CD4-positive, alpha-beta T cell (primary cell): ENCODE measurements at regions of chr1 and their contacts with region 1.

Region 1: DNA sequence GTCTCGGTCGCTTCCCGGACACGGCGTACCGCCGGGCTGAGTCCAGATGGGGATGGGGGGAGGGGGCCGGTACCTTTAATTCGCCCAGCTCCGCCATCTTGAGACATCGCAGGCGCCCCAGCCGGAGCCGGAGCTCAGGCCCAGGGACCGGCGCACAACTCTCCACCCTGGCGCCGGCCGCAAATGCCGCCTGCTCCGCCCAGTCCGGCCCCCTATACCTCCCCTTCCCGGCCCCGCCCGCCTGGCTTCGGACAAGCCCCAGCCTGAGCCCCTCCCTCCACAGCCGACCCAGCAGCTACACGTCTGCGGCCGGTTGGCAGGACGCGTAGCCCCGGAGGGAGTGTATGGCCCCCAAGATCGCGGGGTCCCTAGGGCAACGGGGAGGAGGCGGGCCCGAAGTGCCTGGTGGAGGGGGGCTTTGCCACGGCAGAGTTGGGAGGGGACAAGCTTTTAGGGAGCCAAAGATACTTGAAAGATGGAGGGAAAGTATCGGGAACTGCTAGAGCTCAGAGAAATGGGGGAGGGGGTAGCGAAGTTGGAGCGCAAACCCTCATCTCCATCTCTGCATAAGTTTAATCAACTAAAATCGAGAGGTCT is at the start of gene PIAS3:
- DNase-seq: peak; percentile 61 to 90 (median 75)
- ATAC-seq: peak; percentile 79
- H3K4me3 ChIP-seq: peak within 1 kb of the TSS; percentile 75
- H3K4me3 Mint-ChIP-seq: peak within 1 kb of the TSS; percentile 98
- H3K27ac ChIP-seq: peak within 1 kb of the TSS; percentile 32 to 67
- H3K27ac Mint-ChIP-seq: peak within 1 kb of the TSS; percentile 85
- H3K4me1 ChIP-seq: peaks cover 22% of the 10 kb centered on the region
- H3K4me1 Mint-ChIP-seq: peaks cover 20% of the 10 kb centered on the region
- H3K27me3 ChIP-seq: no peaks in the 10 kb centered on the region
- H3K27me3 Mint-ChIP-seq: no peaks in the 10 kb centered on the region
- CTCF ChIP-seq: no peak
- total RNA-seq, gene PIAS3: 18.7 to 19.7 TPM

Region 2: GRCh38 chr1:145720877-145721671 is 137.9 kb before region 1 on chr1:
- CTCF ChIA-PET with region 1: no interaction called
- POLR2A ChIA-PET with region 1: no interaction called
- intact Hi-C with region 1: no loop called
- DNase-seq: peak; percentile 37 to 80 (median 61)
- ATAC-seq: peak; percentile 85
- H3K4me3 ChIP-seq: peak overlapping the region; percentile 35
- H3K4me3 Mint-ChIP-seq: peak overlapping the region; percentile 48
- H3K27ac ChIP-seq: no peak overlapping the region
- H3K27ac Mint-ChIP-seq: no peak overlapping the region
- H3K4me1 ChIP-seq: peaks cover 14% of the 10 kb centered on the region
- H3K4me1 Mint-ChIP-seq: peaks cover 9% of the 10 kb centered on the region
- H3K27me3 ChIP-seq: peaks cover 3 to 7% of the 10 kb centered on the region in 2 experiments
- H3K27me3 Mint-ChIP-seq: peaks cover 29% of the 10 kb centered on the region
- CTCF ChIP-seq: peak; percentile 98

Region 3: GRCh38 chr1:145786271-145786670 is 72.7 kb before region 1 on chr1:
- CTCF ChIA-PET with region 1: no interaction called
- POLR2A ChIA-PET with region 1: no interaction called
- intact Hi-C with region 1: no loop called
- DNase-seq: no peak
- ATAC-seq: no peak
- H3K4me3 ChIP-seq: no peak overlapping the region
- H3K4me3 Mint-ChIP-seq: no peak overlapping the region
- H3K27ac ChIP-seq: no peak overlapping the region
- H3K27ac Mint-ChIP-seq: peak overlapping the region; percentile 3
- H3K4me1 ChIP-seq: no peaks in the 10 kb centered on the region
- H3K4me1 Mint-ChIP-seq: peaks cover 32% of the 10 kb centered on the region
- H3K27me3 ChIP-seq: no peaks in the 10 kb centered on the region
- H3K27me3 Mint-ChIP-seq: no peaks in the 10 kb centered on the region
- CTCF ChIP-seq: no peak

Region 4: GRCh38 chr1:145823565-145824498 is 35.2 kb before region 1 on chr1 and contains the starts of genes POLR3C and RNF115:
- CTCF ChIA-PET with region 1: no interaction called
- POLR2A ChIA-PET with region 1: interaction called, 37 read pairs
- intact Hi-C with region 1: no loop called
- DNase-seq: peak; percentile 75 to 95 (median 86)
- ATAC-seq: peak; percentile 96
- H3K4me3 ChIP-seq: peak within 1 kb of the TSS; percentile 74
- H3K4me3 Mint-ChIP-seq: peak within 1 kb of the TSS; percentile 96
- H3K27ac ChIP-seq: peak within 1 kb of the TSS; percentile 78 to 81
- H3K27ac Mint-ChIP-seq: peak within 1 kb of the TSS; percentile 91
- H3K4me1 ChIP-seq: peaks cover 12% of the 10 kb centered on the region
- H3K4me1 Mint-ChIP-seq: peaks cover 29% of the 10 kb centered on the region
- H3K27me3 ChIP-seq: no peaks in the 10 kb centered on the region
- H3K27me3 Mint-ChIP-seq: no peaks in the 10 kb centered on the region
- CTCF ChIP-seq: no peak
- total RNA-seq, gene POLR3C: 18.6 to 19.9 TPM
- total RNA-seq, gene RNF115: 11.4 to 11.9 TPM

Region 5: DNA sequence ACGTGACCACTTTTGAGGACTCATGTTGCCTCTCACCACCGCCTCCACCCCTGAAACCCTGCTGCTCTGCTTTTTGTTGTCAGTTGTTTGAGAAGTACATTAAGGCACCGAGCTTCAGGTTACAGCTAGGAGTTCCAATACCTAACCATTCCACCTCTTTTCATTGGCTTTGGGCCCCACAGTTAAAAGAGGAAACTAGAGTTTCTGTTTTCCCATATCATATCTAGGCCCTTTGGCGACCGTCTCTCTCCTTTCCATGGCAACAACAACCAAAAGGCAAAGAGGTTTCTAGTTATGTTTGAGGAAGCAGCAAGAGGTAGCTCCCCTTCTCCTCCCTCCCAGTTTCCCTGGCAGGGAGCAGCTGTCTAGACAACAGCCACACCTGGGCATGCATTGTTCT is 20.8 kb after region 1 on chr1:
- CTCF ChIA-PET with region 1: no interaction called
- POLR2A ChIA-PET with region 1: interaction called, 24 read pairs
- intact Hi-C with region 1: loop called in 1 of 2 experiments (anchors 2 kb)
- DNase-seq: no peak
- ATAC-seq: no peak
- H3K4me3 ChIP-seq: no peak overlapping the region
- H3K4me3 Mint-ChIP-seq: no peak overlapping the region
- H3K27ac ChIP-seq: no peak overlapping the region
- H3K27ac Mint-ChIP-seq: no peak overlapping the region
- H3K4me1 ChIP-seq: no peaks in the 10 kb centered on the region
- H3K4me1 Mint-ChIP-seq: peaks cover 4% of the 10 kb centered on the region
- H3K27me3 ChIP-seq: peaks cover 13 to 18% of the 10 kb centered on the region in 2 experiments
- H3K27me3 Mint-ChIP-seq: peaks cover 25% of the 10 kb centered on the region
- CTCF ChIP-seq: no peak

Region 6: DNA sequence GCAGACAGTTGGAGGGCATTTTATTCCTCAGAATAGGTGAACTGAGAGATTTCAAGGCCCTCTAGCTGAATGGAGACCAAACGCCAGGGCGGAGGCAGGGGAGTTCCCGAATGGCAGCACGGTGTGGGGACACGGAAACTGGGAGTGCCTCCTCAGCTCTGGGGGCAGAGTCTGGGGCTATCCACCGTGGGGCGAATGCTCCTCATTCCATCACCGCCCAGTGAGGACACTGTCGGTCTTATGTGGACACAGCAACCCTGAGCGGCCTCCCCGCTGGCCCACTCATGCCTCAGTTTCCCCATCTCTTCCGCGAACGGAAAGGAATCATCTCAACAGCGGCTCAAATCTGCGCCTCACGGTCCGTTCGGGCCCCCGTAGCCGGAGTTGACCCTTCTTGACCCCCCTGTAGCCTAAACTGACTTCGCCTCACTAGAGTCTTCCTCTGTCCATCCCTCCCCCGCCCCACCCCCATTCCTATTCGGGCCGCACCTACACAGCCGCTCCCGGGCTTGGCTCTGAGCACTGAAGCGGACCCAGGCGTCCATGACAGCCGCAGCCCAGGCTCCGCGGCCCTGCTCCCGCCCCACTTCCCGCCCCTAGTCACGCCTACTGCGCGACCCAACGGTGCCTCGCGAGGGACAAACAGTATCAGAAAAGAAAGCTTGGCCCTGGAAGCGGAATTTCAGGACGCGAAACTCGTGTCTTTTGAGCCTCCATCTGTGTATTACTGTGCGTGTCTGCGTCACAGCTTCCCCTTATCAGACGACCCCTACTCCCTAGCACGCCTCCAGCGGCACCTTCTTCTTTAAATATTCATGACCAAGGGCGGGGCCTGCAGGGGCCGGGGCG is 59.4 kb after region 1 on chr1 and contains the start of gene PEX11B:
- CTCF ChIA-PET with region 1: interaction called, 4 read pairs
- POLR2A ChIA-PET with region 1: interaction called, 37 read pairs
- intact Hi-C with region 1: loop called (anchors 2 to 5 kb)
- DNase-seq: peak; percentile 87 to 96 (median 92)
- ATAC-seq: peak; percentile 90
- H3K4me3 ChIP-seq: peak within 1 kb of the TSS; percentile 87
- H3K4me3 Mint-ChIP-seq: peak within 1 kb of the TSS; percentile 94
- H3K27ac ChIP-seq: peak within 1 kb of the TSS; percentile 52 to 60
- H3K27ac Mint-ChIP-seq: peak within 1 kb of the TSS; percentile 92
- H3K4me1 ChIP-seq: peaks cover 31% of the 10 kb centered on the region
- H3K4me1 Mint-ChIP-seq: peaks cover 47% of the 10 kb centered on the region
- H3K27me3 ChIP-seq: no peaks in the 10 kb centered on the region
- H3K27me3 Mint-ChIP-seq: no peaks in the 10 kb centered on the region
- CTCF ChIP-seq: no peak
- total RNA-seq, gene PEX11B: 11.6 to 13.2 TPM

Region 7: GRCh38 chr1:145963995-145964901 is 105.3 kb after region 1 on chr1 and contains the starts of genes ANKRD34A and POLR3GL:
- CTCF ChIA-PET with region 1: no interaction called
- POLR2A ChIA-PET with region 1: interaction called, 44 read pairs
- intact Hi-C with region 1: loop called in 1 of 2 experiments (anchors 2 kb)
- DNase-seq: peak; percentile 75 to 96 (median 88)
- ATAC-seq: peak; percentile 90
- H3K4me3 ChIP-seq: peak within 1 kb of the TSS; percentile 72
- H3K4me3 Mint-ChIP-seq: peak within 1 kb of the TSS; percentile 94
- H3K27ac ChIP-seq: peak within 1 kb of the TSS; percentile 58 to 62
- H3K27ac Mint-ChIP-seq: peak within 1 kb of the TSS; percentile 94
- H3K4me1 ChIP-seq: peaks cover 58% of the 10 kb centered on the region
- H3K4me1 Mint-ChIP-seq: peaks cover 58% of the 10 kb centered on the region
- H3K27me3 ChIP-seq: no peaks in the 10 kb centered on the region
- H3K27me3 Mint-ChIP-seq: no peaks in the 10 kb centered on the region
- CTCF ChIP-seq: no peak
- total RNA-seq, gene ANKRD34A: 0.42 to 0.47 TPM
- total RNA-seq, gene POLR3GL: 17.2 to 17.8 TPM

Region 8: DNA sequence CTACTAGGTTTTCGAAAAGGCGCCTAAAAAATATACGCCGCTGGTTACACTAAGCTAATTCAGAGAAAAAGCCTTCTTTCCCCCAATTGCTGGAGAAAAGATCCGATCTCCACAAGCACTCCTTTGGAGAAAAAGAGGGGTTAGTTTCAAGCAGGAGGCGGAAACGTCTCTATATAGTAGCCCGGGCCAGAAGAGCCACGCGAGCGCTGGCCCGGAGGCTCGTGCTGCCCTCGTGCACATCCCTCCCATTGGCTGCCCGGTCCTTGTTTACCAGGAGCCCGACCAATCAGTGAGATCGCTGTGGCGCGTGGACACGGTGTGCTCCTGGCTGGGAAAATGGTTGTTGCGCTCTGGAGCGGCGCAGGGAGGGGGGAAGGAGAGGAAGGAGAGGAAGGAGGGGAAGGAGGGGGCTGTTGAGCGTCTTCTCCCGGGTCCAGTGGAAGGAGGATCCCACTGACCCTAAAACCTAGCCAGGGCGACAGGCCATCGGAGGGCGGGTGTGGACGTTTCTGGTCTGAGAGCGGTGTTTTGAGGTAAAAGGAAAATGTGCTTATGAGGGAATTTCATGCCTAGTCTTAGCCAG is 137.5 kb after region 1 on chr1 and contains the start of gene TXNIP:
- CTCF ChIA-PET with region 1: no interaction called
- POLR2A ChIA-PET with region 1: interaction called, 38 read pairs
- intact Hi-C with region 1: no loop called
- DNase-seq: peak; percentile 70 to 98 (median 91)
- ATAC-seq: peak; percentile 72
- H3K4me3 ChIP-seq: peak within 1 kb of the TSS; percentile 61
- H3K4me3 Mint-ChIP-seq: peak within 1 kb of the TSS; percentile 95
- H3K27ac ChIP-seq: peak within 1 kb of the TSS; percentile 91 to 92
- H3K27ac Mint-ChIP-seq: peak within 1 kb of the TSS; percentile 95
- H3K4me1 ChIP-seq: peaks cover 57% of the 10 kb centered on the region
- H3K4me1 Mint-ChIP-seq: peaks cover 71% of the 10 kb centered on the region
- H3K27me3 ChIP-seq: no peaks in the 10 kb centered on the region
- H3K27me3 Mint-ChIP-seq: no peaks in the 10 kb centered on the region
- CTCF ChIP-seq: no peak
- total RNA-seq, gene TXNIP: 1,317 to 1,358 TPM